Endothelial cell of umbilical vein (primary cell): ENCODE measurements at regions of chr3 and their contacts with region 1.

Region 1: DNA sequence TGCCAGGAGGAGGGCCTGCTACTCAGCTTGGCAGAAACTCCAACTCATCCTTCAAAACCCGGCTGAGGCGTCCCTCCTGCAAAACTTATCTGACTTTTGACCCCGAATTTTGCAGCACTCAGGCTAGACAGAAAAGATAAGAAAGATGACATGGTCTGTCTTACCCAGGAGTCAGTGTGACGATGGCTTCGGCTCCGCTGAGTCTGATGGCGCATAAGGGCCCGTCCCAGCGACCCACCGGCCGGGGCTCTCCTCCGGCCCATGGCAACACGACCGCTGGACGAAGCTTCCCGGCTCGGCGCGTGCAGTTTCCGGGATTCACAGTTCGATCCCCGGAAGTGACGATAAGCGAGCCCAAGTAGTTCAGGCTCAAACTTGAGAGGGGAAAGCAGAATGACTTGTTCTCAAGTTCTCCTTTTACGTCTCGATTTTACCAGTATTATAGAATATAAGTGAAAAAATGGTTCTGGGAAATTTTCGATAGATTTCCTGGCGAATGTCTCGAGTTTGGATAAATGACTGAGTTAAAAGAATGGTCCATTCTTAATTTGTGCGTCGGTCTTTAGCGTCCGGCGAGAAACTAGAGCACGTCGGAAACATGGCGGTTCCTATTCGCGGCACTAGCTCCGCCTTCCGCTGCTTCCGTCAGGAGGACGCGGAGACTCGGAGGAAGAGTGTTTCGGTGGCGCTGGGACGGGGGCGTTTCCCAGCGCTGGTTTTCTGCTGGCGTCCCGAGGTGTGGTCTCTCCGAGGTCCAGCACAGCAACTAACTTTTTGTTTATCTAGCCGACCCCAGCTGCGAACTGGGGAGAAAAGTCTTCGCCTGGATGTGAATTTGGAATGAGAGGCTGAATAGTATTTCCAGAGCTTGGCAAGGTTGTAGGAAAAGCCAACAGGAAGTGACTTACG is at the start of gene LSG1:
- DNase-seq: peak; percentile 96
- H3K4me3 ChIP-seq: peak within 1 kb of the TSS; percentile 61 to 97 (median 64)
- H3K27ac ChIP-seq: peak within 1 kb of the TSS; percentile 93
- H3K4me1 ChIP-seq: peaks cover 15% of the 10 kb centered on the region
- H3K27me3 ChIP-seq: peaks cover 0 to 2% of the 10 kb centered on the region in 2 experiments
- CTCF ChIP-seq: no peak
- POLR2A ChIP-seq: peak; percentile 80
- total RNA-seq, gene LSG1: 48.3 and 52.7 TPM in 2 replicates

Region 2: GRCh38 chr3:194632809-194633348 is 39.3 kb before region 1 on chr3:
- CTCF ChIA-PET with region 1: interaction called, 36 read pairs
- POLR2A ChIA-PET with region 1: interaction called, 8 read pairs
- dilution Hi-C with region 1: no loop called
- intact Hi-C with region 1: loop called (anchors 5 kb)
- DNase-seq: peak; percentile 23
- H3K4me3 ChIP-seq: peak overlapping the region; percentile 70 to 96 (median 94)
- H3K27ac ChIP-seq: peak overlapping the region; percentile 83
- H3K4me1 ChIP-seq: peaks cover 17% of the 10 kb centered on the region
- H3K27me3 ChIP-seq: no peaks in the 10 kb centered on the region
- CTCF ChIP-seq: no peak
- POLR2A ChIP-seq: no peak

Region 3: GRCh38 chr3:194640829-194641228 is 31.3 kb before region 1 on chr3:
- CTCF ChIA-PET with region 1: interaction called, 52 read pairs
- POLR2A ChIA-PET with region 1: interaction called, 8 read pairs
- dilution Hi-C with region 1: no loop called
- intact Hi-C with region 1: loop called (anchors 1 kb)
- DNase-seq: peak; percentile 79
- H3K4me3 ChIP-seq: peak overlapping the region in 1 of 3 experiments; percentile 14
- H3K27ac ChIP-seq: peak overlapping the region; percentile 91
- H3K4me1 ChIP-seq: peaks cover 35% of the 10 kb centered on the region
- H3K27me3 ChIP-seq: no peaks in the 10 kb centered on the region
- CTCF ChIP-seq: peak; percentile 49 to 61
- POLR2A ChIP-seq: no peak

Region 4: GRCh38 chr3:194647747-194648146 is 24.4 kb before region 1 on chr3:
- CTCF ChIA-PET with region 1: interaction called, 15 read pairs
- POLR2A ChIA-PET with region 1: no interaction called
- dilution Hi-C with region 1: no loop called
- intact Hi-C with region 1: no loop called
- DNase-seq: no peak
- H3K4me3 ChIP-seq: no peak overlapping the region
- H3K27ac ChIP-seq: no peak overlapping the region
- H3K4me1 ChIP-seq: no peaks in the 10 kb centered on the region
- H3K27me3 ChIP-seq: no peaks in the 10 kb centered on the region
- CTCF ChIP-seq: no peak
- POLR2A ChIP-seq: no peak

Region 5: DNA sequence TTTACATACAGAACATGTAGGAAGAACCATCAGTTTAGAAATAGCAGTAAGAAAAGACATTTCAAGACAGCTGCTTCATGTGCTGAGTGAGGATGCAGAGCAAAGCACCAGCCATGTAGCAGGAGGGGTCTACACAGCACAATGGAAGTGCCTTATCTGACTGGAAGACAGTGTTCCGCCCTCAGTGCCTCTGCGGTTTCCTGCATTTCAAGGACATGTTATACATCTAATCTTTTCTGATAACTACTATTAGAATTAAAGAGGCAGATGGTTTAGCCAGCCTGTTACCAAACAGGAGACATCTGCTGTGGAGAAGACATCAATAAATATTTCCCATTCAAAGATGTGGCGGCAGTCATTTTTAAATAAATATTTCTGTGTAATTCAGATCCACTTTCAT is 10.8 kb before region 1 on chr3:
- CTCF ChIA-PET with region 1: interaction called, 22 read pairs
- POLR2A ChIA-PET with region 1: interaction called, 6 read pairs
- dilution Hi-C with region 1: no loop called
- intact Hi-C with region 1: no loop called
- DNase-seq: peak; percentile 88
- H3K4me3 ChIP-seq: peak overlapping the region in 1 of 3 experiments; percentile 5
- H3K27ac ChIP-seq: peak overlapping the region; percentile 70
- H3K4me1 ChIP-seq: peaks cover 66% of the 10 kb centered on the region
- H3K27me3 ChIP-seq: no peaks in the 10 kb centered on the region
- CTCF ChIP-seq: no peak
- POLR2A ChIP-seq: peak; percentile 58

Region 6: DNA sequence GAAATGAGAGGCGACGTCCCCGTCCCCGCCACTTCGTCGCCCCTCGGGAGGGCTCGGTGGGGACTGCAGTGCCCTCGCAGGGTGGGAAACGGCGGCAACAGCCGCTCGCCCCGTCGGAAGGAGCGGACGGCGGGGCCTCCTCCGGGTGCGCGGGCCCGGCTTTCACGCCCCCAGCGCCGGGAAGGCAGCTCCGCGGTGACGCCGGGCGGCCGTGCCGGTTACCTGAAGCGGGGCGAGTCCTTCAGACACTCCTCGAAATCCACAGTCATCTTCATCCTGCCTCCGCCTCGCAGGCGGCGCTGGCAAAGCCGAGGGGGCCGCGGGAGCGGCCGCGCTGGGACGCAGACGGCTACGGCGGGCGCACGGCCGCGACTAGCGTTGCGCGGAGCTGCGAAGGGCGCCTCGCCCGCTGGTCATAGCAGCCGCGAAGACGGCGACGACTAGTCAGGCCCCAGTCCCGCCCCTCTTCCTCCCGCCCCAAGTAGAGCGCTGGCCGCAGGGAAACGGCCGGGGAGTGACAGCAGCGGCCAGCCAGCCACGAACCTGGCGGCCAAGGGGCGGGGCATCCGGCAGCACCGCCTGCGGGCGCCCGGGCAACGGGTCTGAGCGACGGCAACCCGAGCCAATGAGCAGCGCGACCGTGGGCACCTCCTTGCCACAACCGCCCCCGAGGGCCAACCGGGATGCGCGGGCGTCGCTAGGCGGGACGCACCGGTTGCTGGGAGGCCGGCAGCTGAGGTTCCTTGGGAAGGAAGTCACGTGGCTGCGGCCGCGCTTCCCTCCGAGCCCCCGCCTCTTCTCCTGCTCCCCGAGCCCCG is 770.6 kb after region 1 on chr3 and contains the start of gene ACAP2:
- CTCF ChIA-PET with region 1: no interaction called
- POLR2A ChIA-PET with region 1: no interaction called
- dilution Hi-C with region 1: no loop called
- intact Hi-C with region 1: loop called (anchors 5 kb)
- DNase-seq: peak; percentile 100
- H3K4me3 ChIP-seq: peak within 1 kb of the TSS; percentile 70 to 88 (median 81)
- H3K27ac ChIP-seq: peak within 1 kb of the TSS; percentile 63
- H3K4me1 ChIP-seq: peaks cover 15% of the 10 kb centered on the region
- H3K27me3 ChIP-seq: no peaks in the 10 kb centered on the region
- CTCF ChIP-seq: no peak
- POLR2A ChIP-seq: peak; percentile 93
- total RNA-seq, gene ACAP2: 34.4 and 36.9 TPM in 2 replicates